GM12878 (cell line): ENCODE measurements at regions of chr2 and their contacts with region 1.

Region 1: DNA sequence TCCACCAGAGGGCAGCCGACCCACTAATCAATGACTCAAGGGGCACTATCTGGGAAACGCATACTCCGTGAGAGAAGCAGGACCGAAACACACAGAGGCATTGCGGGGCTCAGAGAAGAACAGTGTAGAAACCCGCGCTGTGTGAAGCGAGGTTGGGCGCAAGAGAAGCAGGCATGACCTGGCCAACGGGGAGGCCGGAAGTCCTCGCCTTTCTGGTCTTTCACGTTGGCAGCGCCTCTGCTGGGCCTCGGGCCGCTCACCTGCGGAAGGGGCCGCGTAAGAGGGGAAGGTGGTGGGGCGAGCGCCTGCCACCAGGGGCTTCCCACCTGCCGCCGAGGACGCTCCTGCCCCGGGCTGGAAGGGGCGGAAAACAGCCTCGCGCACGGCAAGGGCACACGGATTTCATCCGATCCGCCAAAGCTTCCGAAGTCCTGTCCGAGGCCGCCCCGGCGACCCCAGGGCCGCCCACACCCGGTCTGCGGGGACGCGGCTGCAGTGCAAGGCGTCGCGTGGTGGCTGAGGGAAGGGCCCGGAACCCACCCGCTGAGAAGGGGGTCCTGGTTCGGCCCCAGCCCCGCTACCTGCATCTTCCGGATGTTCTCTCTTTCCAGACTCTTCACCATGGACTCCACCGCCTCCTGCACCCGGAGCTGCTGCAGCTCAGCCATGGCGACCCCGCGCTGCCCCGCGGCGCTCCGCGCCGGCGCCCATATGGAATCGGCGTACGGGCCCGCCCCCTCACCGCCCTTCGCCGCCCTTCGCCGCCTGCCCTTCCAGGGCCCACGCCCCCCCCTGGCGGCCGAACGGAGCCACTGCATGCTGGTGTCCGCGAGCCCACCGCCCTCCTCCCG is at the start of gene FAM136A:
- DNase-seq: peak; percentile 40
- ATAC-seq: peak; percentile 93
- H3K4me3 ChIP-seq: peak within 1 kb of the TSS; percentile 84
- H3K27ac ChIP-seq: peak within 1 kb of the TSS; percentile 85
- H3K4me1 ChIP-seq: peaks cover 3% of the 10 kb centered on the region; the same call in 1 of the 2 replicates
- H3K27me3 ChIP-seq: no peaks in the 10 kb centered on the region
- CTCF ChIP-seq: peak; percentile 88 to 97 (median 95)
- EP300 ChIP-seq: no peak
- POLR2A ChIP-seq: peak; percentile 82
- RAD21 ChIP-seq: peak; percentile 70
- polyA plus RNA-seq, gene FAM136A: 128 to 134 TPM

Region 2: GRCh38 chr2:70248181-70248847 is 53.3 kb before region 1 on chr2 and contains the start of gene TIA1:
- CTCF ChIA-PET with region 1: interaction called, 21 read pairs
- POLR2A ChIA-PET with region 1: interaction called, 3 read pairs
- RAD21 ChIA-PET with region 1: no interaction called
- SMC1A ChIA-PET with region 1: interaction called, 3 read pairs
- in situ Hi-C with region 1: no loop called
- intact Hi-C with region 1: no loop called
- DNase-seq: peak; percentile 96
- ATAC-seq: peak; percentile 97
- H3K4me3 ChIP-seq: peak within 1 kb of the TSS; percentile 97
- H3K27ac ChIP-seq: peak within 1 kb of the TSS; percentile 96
- H3K4me1 ChIP-seq: no peaks in the 10 kb centered on the region
- H3K27me3 ChIP-seq: no peaks in the 10 kb centered on the region
- CTCF ChIP-seq: no peak
- EP300 ChIP-seq: no peak
- POLR2A ChIP-seq: peak; percentile 89
- RAD21 ChIP-seq: no peak
- polyA plus RNA-seq, gene TIA1: 21.5 to 23.2 TPM

Region 3: DNA sequence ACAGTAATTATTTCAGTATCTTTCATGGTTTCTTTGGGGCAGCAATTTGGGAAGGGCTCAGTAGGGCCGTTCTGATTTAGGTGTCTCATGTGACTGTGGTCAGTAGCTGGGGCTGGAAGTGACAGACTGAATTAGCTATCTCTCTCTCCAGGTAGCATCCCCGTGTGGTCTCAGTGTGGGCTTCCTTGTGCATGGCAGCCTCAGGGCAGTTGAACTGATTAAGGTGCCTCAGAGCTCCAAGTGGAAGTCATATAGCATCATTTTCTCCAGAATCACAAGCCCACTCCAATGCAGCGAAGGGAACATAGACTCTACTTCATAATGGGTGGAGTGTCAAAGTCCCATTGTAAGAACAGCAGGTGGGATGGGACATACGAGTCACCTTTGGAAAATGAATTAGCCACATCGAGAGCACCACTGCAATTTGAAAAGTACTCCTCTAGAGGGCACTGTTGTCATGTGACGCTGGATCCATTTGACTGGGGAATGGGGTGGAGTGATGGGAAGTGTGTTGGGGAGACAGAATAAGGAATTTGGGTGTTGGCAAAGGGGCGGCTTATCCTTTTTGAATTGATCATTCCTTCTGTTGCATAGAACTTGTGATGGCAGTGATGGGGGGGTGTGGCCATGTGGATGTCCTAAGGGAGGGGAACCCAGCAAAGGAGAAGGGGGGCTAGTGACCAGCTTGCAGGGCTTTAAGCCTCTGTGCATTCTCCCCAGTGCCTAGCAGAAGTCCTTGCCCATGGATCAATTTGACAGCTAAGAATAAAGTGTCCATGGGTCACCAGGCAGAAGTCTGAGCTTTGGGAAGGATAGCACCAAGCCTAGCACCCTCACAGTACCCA is 39.6 kb after region 1 on chr2:
- CTCF ChIA-PET with region 1: interaction called, 15 read pairs
- POLR2A ChIA-PET with region 1: no interaction called
- RAD21 ChIA-PET with region 1: interaction called, 3 read pairs
- SMC1A ChIA-PET with region 1: interaction called, 4 read pairs
- in situ Hi-C with region 1: no loop called
- intact Hi-C with region 1: no loop called
- DNase-seq: no peak
- ATAC-seq: peak; percentile 83
- H3K4me3 ChIP-seq: no peak overlapping the region
- H3K27ac ChIP-seq: no peak overlapping the region
- H3K4me1 ChIP-seq: no peaks in the 10 kb centered on the region
- H3K27me3 ChIP-seq: no peaks in the 10 kb centered on the region
- CTCF ChIP-seq: peak; percentile 71 to 79 (median 77)
- EP300 ChIP-seq: no peak
- POLR2A ChIP-seq: no peak
- RAD21 ChIP-seq: peak; percentile 94

Region 4: DNA sequence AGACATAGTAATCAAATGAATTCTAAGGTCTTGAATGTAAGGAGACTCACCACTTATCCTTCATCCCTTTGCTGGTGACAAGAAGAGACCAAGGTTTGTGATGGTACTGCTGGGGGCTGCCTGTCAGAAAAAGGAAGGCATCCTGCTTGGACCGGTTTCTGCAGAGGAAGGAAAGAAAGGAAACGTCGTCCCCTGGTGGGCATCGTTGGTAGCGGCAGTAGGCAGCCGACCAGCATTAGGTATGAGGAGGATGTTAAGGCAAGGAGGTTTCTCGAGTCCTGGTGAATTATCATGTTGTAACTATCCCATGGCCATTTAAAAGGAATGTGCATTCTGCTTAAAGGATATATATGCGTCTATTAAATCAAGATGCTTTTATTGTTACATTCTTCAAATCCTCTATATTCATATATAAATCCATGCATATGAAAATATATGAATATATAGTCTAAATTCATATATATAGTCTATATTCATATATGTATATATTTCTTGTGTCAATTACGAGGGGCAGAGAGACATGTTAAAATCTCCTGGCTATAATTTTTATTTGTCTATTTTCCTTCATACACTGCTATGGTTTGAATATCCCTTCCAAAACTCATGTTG is 346.4 kb after region 1 on chr2:
- CTCF ChIA-PET with region 1: interaction called, 48 read pairs
- POLR2A ChIA-PET with region 1: no interaction called
- RAD21 ChIA-PET with region 1: interaction called, 17 read pairs
- SMC1A ChIA-PET with region 1: interaction called, 21 read pairs
- in situ Hi-C with region 1: no loop called
- intact Hi-C with region 1: loop called (anchors 1 kb)
- DNase-seq: no peak
- ATAC-seq: peak; percentile 88
- H3K4me3 ChIP-seq: no peak overlapping the region
- H3K27ac ChIP-seq: no peak overlapping the region
- H3K4me1 ChIP-seq: no peaks in the 10 kb centered on the region
- H3K27me3 ChIP-seq: no peaks in the 10 kb centered on the region; a peak in 1 of 4 replicates
- CTCF ChIP-seq: peak; percentile 94 to 100 (median 98); a peak in 5 of 6 replicates
- EP300 ChIP-seq: no peak
- POLR2A ChIP-seq: no peak
- RAD21 ChIP-seq: peak; percentile 82

Region 5: DNA sequence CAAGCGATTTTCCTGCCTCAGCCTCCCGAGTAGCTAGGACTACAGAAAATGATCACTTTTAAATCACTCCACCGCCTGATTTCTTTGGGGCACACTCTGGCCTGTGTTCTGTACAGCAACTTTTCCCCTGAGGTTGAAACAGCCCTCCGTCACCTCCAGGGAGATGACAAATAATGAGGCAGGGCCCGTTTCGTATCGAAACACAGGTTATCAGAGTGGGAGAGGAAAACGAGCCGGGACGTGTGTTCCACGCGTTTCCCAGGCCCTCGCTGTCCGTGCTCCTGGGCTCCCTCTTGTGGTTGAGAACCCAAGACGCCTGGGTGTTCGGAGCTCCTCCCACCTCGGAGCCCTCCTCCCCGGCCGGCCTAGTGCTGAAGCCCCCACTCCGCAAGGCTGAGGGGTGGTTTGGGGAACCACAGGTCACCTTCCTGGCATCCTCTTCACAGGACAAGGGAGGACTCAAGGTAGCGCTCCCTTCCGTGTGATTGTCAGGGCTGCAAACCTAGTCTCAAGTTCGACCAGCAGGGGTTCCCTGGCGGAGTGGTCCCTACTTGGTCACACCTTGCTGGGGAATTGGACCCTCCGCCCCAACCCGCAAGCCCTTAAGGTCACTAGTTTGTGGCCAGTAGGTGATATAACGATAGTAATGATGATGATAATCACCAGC is 646.9 kb after region 1 on chr2:
- CTCF ChIA-PET with region 1: interaction called, 13 read pairs
- POLR2A ChIA-PET with region 1: no interaction called
- RAD21 ChIA-PET with region 1: interaction called, 7 read pairs
- SMC1A ChIA-PET with region 1: interaction called, 6 read pairs
- in situ Hi-C with region 1: loop called (anchors 10 kb)
- intact Hi-C with region 1: loop called (anchors 10 kb)
- DNase-seq: no peak
- ATAC-seq: peak; percentile 98
- H3K4me3 ChIP-seq: no peak overlapping the region
- H3K27ac ChIP-seq: no peak overlapping the region
- H3K4me1 ChIP-seq: no peaks in the 10 kb centered on the region; the same call in 1 of the 2 replicates
- H3K27me3 ChIP-seq: no peaks in the 10 kb centered on the region
- CTCF ChIP-seq: peak; percentile 73 to 87 (median 87)
- EP300 ChIP-seq: no peak
- POLR2A ChIP-seq: no peak
- RAD21 ChIP-seq: peak; percentile 36; the same call in 1 of the 2 replicates